GM12878 (cell line): ENCODE measurements at regions of chr6 and their contacts with region 1.

Region 1: DNA sequence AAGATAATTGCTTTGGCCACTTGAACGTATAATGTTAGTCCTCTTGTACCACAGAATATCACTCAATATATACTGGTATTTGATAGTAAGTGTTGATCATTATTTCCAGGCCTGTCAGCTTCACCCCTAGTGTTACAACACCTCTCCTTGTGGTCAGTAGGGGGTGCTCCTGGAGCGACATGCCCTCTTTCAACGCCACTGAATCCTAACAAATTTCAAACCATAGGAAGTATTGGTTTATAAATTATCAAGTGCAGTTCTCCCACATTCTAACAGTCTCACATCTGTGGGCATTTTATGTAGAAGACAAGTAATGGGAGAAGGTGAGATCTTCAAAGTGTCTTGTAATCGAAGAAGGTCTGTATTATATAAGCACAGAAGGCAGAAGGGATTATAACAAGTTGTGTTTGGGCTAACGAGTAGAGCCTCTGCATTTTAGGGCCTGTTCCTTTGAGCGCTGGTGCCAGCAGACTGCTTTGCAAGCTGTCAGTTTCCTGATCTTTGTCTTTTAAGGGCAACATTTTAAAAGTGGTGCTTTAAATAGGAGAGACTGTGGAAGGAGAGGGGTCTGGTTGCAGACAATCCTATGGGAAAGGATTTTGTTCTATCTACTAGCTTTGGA is 57.1 kb upstream of the CEP162 start:
- DNase-seq: no peak
- ATAC-seq: peak; percentile 88
- H3K4me3 ChIP-seq: no peak overlapping the region
- H3K27ac ChIP-seq: no peak overlapping the region
- H3K4me1 ChIP-seq: no peaks in the 10 kb centered on the region
- H3K27me3 ChIP-seq: no peaks in the 10 kb centered on the region
- CTCF ChIP-seq: peak; percentile 55 to 63 (median 62)
- EP300 ChIP-seq: no peak
- POLR2A ChIP-seq: no peak
- RAD21 ChIP-seq: peak; percentile 80

Region 2: DNA sequence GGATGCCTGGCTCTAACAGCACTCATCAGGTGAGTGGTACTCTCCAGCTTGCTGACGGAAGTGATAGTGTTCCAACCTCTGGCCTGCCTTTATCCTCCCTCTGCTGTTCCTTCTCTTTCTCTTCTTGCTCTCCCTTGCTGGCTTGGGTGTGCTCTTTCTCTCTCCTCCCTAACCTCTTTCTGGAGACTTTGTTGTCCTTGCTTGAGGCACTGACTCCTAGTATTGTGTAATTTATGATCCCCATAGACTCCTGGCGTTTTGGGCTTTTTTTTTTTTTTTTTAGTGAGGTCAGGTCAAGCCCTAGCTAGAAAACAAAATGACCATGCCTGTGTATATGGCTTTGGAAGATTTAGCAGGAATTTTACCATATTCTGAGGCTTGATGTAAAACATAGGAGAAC is 335.7 kb before region 1 on chr6:
- CTCF ChIA-PET with region 1: no interaction called
- POLR2A ChIA-PET with region 1: no interaction called
- RAD21 ChIA-PET with region 1: no interaction called
- SMC1A ChIA-PET with region 1: no interaction called
- in situ Hi-C with region 1: no loop called
- intact Hi-C with region 1: no loop called
- DNase-seq: no peak
- ATAC-seq: no peak
- H3K4me3 ChIP-seq: no peak overlapping the region
- H3K27ac ChIP-seq: no peak overlapping the region
- H3K4me1 ChIP-seq: no peaks in the 10 kb centered on the region
- H3K27me3 ChIP-seq: no peaks in the 10 kb centered on the region
- CTCF ChIP-seq: no peak
- EP300 ChIP-seq: no peak
- POLR2A ChIP-seq: no peak
- RAD21 ChIP-seq: no peak

Region 3: DNA sequence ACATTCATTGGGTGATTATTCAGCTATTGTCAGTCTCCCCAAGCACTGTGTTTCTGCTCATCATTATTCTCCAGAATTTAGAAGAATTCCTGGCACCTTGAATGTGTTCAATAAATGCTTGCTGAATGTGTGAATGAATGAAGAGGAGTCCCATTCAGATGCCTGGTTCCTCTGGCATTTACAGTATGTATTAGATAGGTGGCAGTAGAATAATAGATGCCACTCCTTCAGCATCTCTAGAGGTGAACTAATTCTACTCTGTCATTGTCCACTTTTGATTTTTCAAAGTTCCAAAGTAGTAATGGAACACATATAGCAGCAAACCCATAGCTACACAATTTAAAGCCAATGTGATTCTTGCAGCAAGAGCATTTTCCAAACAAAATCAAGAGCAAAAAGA is 61.8 kb after region 1 on chr6:
- CTCF ChIA-PET with region 1: no interaction called
- POLR2A ChIA-PET with region 1: no interaction called
- RAD21 ChIA-PET with region 1: no interaction called
- SMC1A ChIA-PET with region 1: no interaction called
- in situ Hi-C with region 1: no loop called
- intact Hi-C with region 1: no loop called
- DNase-seq: no peak
- ATAC-seq: peak; percentile 33; the same call in 1 of the 3 replicates
- H3K4me3 ChIP-seq: no peak overlapping the region
- H3K27ac ChIP-seq: no peak overlapping the region
- H3K4me1 ChIP-seq: no peaks in the 10 kb centered on the region
- H3K27me3 ChIP-seq: no peaks in the 10 kb centered on the region
- CTCF ChIP-seq: no peak; a peak in 1 of 6 replicates
- EP300 ChIP-seq: no peak
- POLR2A ChIP-seq: no peak
- RAD21 ChIP-seq: no peak

Region 4: GRCh38 chr6:84411060-84411629 is 126.6 kb after region 1 on chr6:
- CTCF ChIA-PET with region 1: interaction called, 8 read pairs
- POLR2A ChIA-PET with region 1: no interaction called
- RAD21 ChIA-PET with region 1: interaction called, 4 read pairs
- SMC1A ChIA-PET with region 1: interaction called, 12 read pairs
- in situ Hi-C with region 1: no loop called
- intact Hi-C with region 1: no loop called
- DNase-seq: no peak
- ATAC-seq: peak; percentile 96
- H3K4me3 ChIP-seq: no peak overlapping the region
- H3K27ac ChIP-seq: no peak overlapping the region
- H3K4me1 ChIP-seq: no peaks in the 10 kb centered on the region
- H3K27me3 ChIP-seq: no peaks in the 10 kb centered on the region
- CTCF ChIP-seq: no peak
- EP300 ChIP-seq: peak; percentile 82 to 88; a peak in 2 of 4 replicates
- POLR2A ChIP-seq: no peak
- RAD21 ChIP-seq: no peak

Region 5: GRCh38 chr6:84568971-84569370 is 284.4 kb after region 1 on chr6:
- CTCF ChIA-PET with region 1: interaction called, 16 read pairs
- POLR2A ChIA-PET with region 1: no interaction called
- RAD21 ChIA-PET with region 1: interaction called, 8 read pairs
- SMC1A ChIA-PET with region 1: interaction called, 16 read pairs
- in situ Hi-C with region 1: no loop called
- intact Hi-C with region 1: loop called (anchors 1 kb)
- DNase-seq: no peak
- ATAC-seq: peak; percentile 58; the same call in 2 of the 3 replicates
- H3K4me3 ChIP-seq: no peak overlapping the region
- H3K27ac ChIP-seq: no peak overlapping the region
- H3K4me1 ChIP-seq: no peaks in the 10 kb centered on the region
- H3K27me3 ChIP-seq: no peaks in the 10 kb centered on the region
- CTCF ChIP-seq: peak in 2 of 3 experiments; percentile 10 to 41; a peak in 2 of 6 replicates
- EP300 ChIP-seq: no peak
- POLR2A ChIP-seq: no peak
- RAD21 ChIP-seq: peak; percentile 51

Region 6: GRCh38 chr6:84791233-84791632 is 506.7 kb after region 1 on chr6:
- CTCF ChIA-PET with region 1: no interaction called
- POLR2A ChIA-PET with region 1: no interaction called
- RAD21 ChIA-PET with region 1: no interaction called
- SMC1A ChIA-PET with region 1: no interaction called
- in situ Hi-C with region 1: no loop called
- intact Hi-C with region 1: no loop called
- DNase-seq: no peak
- ATAC-seq: peak; percentile 56
- H3K4me3 ChIP-seq: no peak overlapping the region
- H3K27ac ChIP-seq: no peak overlapping the region
- H3K4me1 ChIP-seq: no peaks in the 10 kb centered on the region
- H3K27me3 ChIP-seq: no peaks in the 10 kb centered on the region
- CTCF ChIP-seq: no peak
- EP300 ChIP-seq: no peak
- POLR2A ChIP-seq: no peak
- RAD21 ChIP-seq: no peak

Region 7: DNA sequence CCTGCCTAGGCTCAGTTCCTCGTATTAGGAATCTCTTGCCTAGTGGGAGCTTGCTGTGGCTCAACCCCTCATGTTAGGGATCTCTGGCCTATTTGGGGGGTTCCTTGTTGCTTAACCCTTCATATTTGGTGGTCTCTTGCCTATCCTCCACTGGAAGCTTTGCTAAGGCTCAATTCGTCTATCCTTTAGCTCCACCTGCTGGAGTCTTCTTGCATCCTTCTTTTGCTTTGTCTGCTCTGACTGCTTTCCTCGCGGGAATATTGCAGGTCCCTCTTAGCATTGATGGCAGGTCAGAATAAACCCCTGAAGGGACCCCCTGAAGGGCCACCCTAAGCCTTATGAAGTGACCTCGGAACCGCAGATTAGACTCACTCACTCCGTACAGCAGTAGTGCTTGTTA is 682.9 kb after region 1 on chr6:
- CTCF ChIA-PET with region 1: interaction called, 5 read pairs
- POLR2A ChIA-PET with region 1: no interaction called
- RAD21 ChIA-PET with region 1: no interaction called
- SMC1A ChIA-PET with region 1: no interaction called
- in situ Hi-C with region 1: no loop called
- intact Hi-C with region 1: loop called (anchors 1 kb)
- DNase-seq: no peak
- ATAC-seq: peak; percentile 42; the same call in 1 of the 3 replicates
- H3K4me3 ChIP-seq: no peak overlapping the region
- H3K27ac ChIP-seq: no peak overlapping the region
- H3K4me1 ChIP-seq: no peaks in the 10 kb centered on the region
- H3K27me3 ChIP-seq: no peaks in the 10 kb centered on the region
- CTCF ChIP-seq: peak; percentile 27 to 41 (median 35); a peak in 4 of 6 replicates
- EP300 ChIP-seq: no peak
- POLR2A ChIP-seq: no peak
- RAD21 ChIP-seq: peak; percentile 56

Region 8: DNA sequence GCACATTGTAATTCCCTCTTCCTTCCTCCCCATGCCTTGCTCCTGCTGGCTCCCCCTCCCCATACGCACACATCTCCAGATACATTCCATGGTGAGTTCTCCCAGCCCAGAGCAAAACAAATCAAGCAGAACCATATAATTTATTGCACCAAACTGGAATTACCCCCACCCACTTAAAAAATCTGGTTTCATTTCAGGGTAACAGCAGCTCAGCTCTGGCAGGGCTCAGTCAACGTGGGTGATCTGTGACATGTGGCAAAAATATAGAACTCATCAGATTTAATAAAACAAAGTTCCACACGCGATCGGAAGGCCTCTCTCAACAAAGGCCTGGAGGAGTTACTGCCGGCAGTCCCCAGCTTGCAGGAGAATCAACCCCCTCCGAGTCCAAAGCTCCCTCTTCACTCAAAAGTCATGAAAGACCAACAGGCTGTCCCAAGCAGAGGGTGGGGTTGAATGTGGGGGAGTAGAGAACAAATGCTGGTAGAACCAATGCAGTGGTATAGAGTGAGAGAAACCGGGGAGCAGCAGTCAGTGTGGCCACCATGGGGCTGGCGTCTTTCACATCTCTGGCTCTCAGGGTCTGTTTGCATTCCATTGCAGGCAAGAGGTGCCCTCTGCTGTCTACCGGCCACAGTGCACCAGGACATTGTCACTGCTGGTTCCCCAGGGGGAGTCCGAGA is 842.1 kb after region 1 on chr6:
- CTCF ChIA-PET with region 1: no interaction called
- POLR2A ChIA-PET with region 1: no interaction called
- RAD21 ChIA-PET with region 1: no interaction called
- SMC1A ChIA-PET with region 1: no interaction called
- in situ Hi-C with region 1: no loop called
- intact Hi-C with region 1: loop called (anchors 10 kb)
- DNase-seq: no peak
- ATAC-seq: peak; percentile 97
- H3K4me3 ChIP-seq: no peak overlapping the region
- H3K27ac ChIP-seq: no peak overlapping the region
- H3K4me1 ChIP-seq: no peaks in the 10 kb centered on the region
- H3K27me3 ChIP-seq: no peaks in the 10 kb centered on the region
- CTCF ChIP-seq: peak; percentile 51 to 70 (median 51); a peak in 5 of 6 replicates
- EP300 ChIP-seq: no peak
- POLR2A ChIP-seq: no peak
- RAD21 ChIP-seq: peak; percentile 59

Region 9: GRCh38 chr6:85323435-85324040 is 1039.0 kb after region 1 on chr6:
- CTCF ChIA-PET with region 1: interaction called, 9 read pairs
- POLR2A ChIA-PET with region 1: no interaction called
- RAD21 ChIA-PET with region 1: no interaction called
- SMC1A ChIA-PET with region 1: no interaction called
- in situ Hi-C with region 1: no loop called
- intact Hi-C with region 1: loop called (anchors 5 kb)
- DNase-seq: peak; percentile 25
- ATAC-seq: peak; percentile 93
- H3K4me3 ChIP-seq: no peak overlapping the region
- H3K27ac ChIP-seq: no peak overlapping the region
- H3K4me1 ChIP-seq: no peaks in the 10 kb centered on the region
- H3K27me3 ChIP-seq: no peaks in the 10 kb centered on the region; a peak in 1 of 4 replicates
- CTCF ChIP-seq: peak; percentile 80 to 88 (median 84)
- EP300 ChIP-seq: no peak
- POLR2A ChIP-seq: no peak
- RAD21 ChIP-seq: peak; percentile 92